CD8-positive, alpha-beta memory T cell (primary cell): ENCODE measurements at regions of chr19 and their contacts with region 1.

Region 1: GRCh38 chr19:35462476-35462953 is 14.5 kb downstream of the FFAR2 start:
- DNase-seq: peak; percentile 54 to 87 (median 80)
- H3K4me3 ChIP-seq: peak overlapping the region; percentile 21
- H3K4me3 Mint-ChIP-seq: peak overlapping the region; percentile 2 to 85 (median 84)
- H3K27ac ChIP-seq: peak overlapping the region; percentile 48
- H3K27ac Mint-ChIP-seq: peak overlapping the region; percentile 77 to 99 (median 96)
- H3K4me1 ChIP-seq: peaks cover 38% of the 10 kb centered on the region
- H3K4me1 Mint-ChIP-seq: peaks cover 45 to 57% (median 50%) of the 10 kb centered on the region in 3 donors
- H3K27me3 ChIP-seq: no peaks in the 10 kb centered on the region
- H3K27me3 Mint-ChIP-seq: peaks cover 0 to 2% of the 10 kb centered on the region in 2 donors

Region 2: DNA sequence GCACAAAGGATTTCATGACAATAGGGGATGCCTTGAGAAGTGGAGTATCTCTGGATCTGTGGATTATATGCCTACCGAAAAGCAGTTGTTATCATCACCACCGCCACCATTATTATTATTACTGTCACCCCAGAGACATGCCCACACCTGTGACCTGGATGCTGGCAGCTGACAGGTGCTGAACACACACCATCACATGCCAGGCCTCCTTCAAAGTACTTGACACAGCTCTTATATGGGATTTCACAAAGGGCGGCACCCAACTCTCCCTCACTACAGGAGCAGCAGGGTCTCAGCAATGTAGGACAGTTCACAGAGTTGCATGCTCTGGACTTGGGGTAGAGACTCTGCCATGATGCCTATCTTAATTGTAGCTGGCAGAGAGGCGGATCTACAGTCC is 97.2 kb before region 1 on chr19:
- CTCF ChIA-PET with region 1: no interaction called
- POLR2A ChIA-PET with region 1: no interaction called
- DNase-seq: no peak
- H3K4me3 ChIP-seq: no peak overlapping the region
- H3K4me3 Mint-ChIP-seq: no peak overlapping the region
- H3K27ac ChIP-seq: no peak overlapping the region
- H3K27ac Mint-ChIP-seq: no peak overlapping the region
- H3K4me1 ChIP-seq: no peaks in the 10 kb centered on the region
- H3K4me1 Mint-ChIP-seq: no peaks in the 10 kb centered on the region
- H3K27me3 ChIP-seq: no peaks in the 10 kb centered on the region
- H3K27me3 Mint-ChIP-seq: peaks cover 15 to 41% of the 10 kb centered on the region in 2 donors

Region 3: DNA sequence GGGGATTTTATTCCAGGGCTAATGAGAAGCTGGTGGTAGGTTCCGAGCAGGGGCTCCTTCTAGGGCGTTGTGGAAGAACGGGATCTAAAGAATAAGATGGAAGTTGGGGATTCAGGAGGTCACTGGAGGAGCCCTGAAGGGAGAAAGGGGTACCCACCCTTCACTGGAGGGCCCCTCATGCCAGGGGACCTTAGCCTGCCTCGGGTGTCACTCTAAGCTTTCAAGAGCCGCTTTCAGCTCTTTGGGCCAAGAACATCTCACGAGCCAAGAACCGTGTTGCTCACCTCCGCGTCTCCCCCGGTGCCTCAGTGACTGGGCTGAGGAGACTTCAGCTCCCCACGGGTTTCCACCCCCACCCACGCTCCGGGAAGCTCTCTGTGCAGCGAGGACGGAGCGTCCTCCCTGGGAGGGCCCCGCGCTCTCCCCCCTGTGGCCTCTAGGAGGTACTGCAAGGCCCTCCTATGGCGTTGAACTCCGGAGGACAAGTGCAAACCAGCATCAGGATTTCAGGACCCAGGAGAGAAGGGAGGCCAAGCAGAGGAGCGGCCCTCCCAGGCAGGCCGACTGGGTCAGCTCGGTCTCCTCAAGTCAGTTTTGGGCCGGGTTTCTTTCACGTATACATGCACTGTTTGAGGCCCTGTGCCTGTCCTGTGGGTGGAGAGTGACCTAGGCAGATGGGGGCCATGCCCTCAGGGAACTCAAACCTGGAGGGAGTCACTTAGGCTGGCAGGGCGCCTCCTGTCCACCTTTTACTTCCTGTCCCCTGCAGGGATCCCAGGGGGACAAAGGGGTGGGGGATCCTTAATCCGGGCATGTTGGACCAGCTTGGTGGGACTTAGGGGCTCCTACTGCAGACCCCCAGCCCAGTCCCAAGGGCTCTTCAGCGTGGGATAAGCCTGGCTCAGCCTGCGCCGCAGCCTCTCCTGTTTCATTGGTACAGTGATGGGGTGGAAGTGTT is 32.9 kb after region 1 on chr19:
- CTCF ChIA-PET with region 1: interaction called, 10 read pairs
- POLR2A ChIA-PET with region 1: no interaction called
- DNase-seq: peak; percentile 42 to 76 (median 46)
- H3K4me3 ChIP-seq: no peak overlapping the region
- H3K4me3 Mint-ChIP-seq: peak overlapping the region in 1 of 7 donors; percentile 24
- H3K27ac ChIP-seq: no peak overlapping the region
- H3K27ac Mint-ChIP-seq: peak overlapping the region in 2 of 8 donors; percentile 6 to 61
- H3K4me1 ChIP-seq: peaks cover 5% of the 10 kb centered on the region
- H3K4me1 Mint-ChIP-seq: peaks cover 0 to 8% (median 5%) of the 10 kb centered on the region in 3 donors
- H3K27me3 ChIP-seq: no peaks in the 10 kb centered on the region
- H3K27me3 Mint-ChIP-seq: peaks cover 18 to 28% of the 10 kb centered on the region in 2 donors